ENCODE measurements at regions of chr7 and their contacts with region 1.

Region 1: GRCh38 chr7:158613481-158613880 is 25.9 kb upstream of the PTPRN2 start:
- DNase-seq: peak; percentile 79
- ATAC-seq: peak; percentile 93
- H3K4me3 ChIP-seq: no peak overlapping the region; the same call in 1 of the 2 replicates
- H3K27ac ChIP-seq: peak overlapping the region; percentile 57
- H3K4me1 ChIP-seq: peaks cover 15% of the 10 kb centered on the region
- H3K27me3 ChIP-seq: no peaks in the 10 kb centered on the region
- CTCF ChIP-seq: no peak
- EP300 ChIP-seq: no peak
- POLR2A ChIP-seq: no peak
- RAD21 ChIP-seq: no peak

Region 2: DNA sequence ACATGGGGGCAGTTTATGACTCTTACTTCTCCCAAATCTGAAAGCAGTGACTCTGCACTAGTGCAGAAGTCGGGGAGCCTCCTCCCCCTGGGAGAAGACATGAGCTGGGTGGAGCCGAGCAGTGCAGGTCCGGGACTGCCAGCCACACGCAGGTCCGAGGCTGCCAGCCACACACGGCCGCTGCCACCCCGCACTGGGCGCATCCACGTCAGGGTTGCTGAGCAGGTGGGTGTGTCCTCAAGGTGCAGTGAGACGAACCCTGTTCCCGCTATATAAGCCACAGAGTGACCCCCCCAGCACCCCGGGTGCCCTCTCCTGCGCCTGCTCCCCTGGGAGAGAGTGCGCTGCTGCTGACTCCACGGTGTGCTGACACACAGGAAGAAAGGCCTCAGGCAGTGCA is 456.0 kb before region 1 on chr7:
- CTCF ChIA-PET with region 1: no interaction called
- POLR2A ChIA-PET with region 1: no interaction called
- RAD21 ChIA-PET with region 1: no interaction called
- SMC1A ChIA-PET with region 1: no interaction called
- in situ Hi-C with region 1: no loop called
- intact Hi-C with region 1: no loop called
- DNase-seq: no peak
- ATAC-seq: no peak
- H3K4me3 ChIP-seq: no peak overlapping the region
- H3K27ac ChIP-seq: no peak overlapping the region
- H3K4me1 ChIP-seq: no peaks in the 10 kb centered on the region
- H3K27me3 ChIP-seq: no peaks in the 10 kb centered on the region
- CTCF ChIP-seq: no peak
- EP300 ChIP-seq: no peak
- POLR2A ChIP-seq: no peak
- RAD21 ChIP-seq: no peak

Region 3: GRCh38 chr7:158655931-158656441 is 42.5 kb after region 1 on chr7:
- CTCF ChIA-PET with region 1: interaction called, 3 read pairs
- POLR2A ChIA-PET with region 1: no interaction called
- RAD21 ChIA-PET with region 1: no interaction called
- SMC1A ChIA-PET with region 1: interaction called, 4 read pairs
- in situ Hi-C with region 1: no loop called
- intact Hi-C with region 1: loop called (anchors 2 kb)
- DNase-seq: peak; percentile 91
- ATAC-seq: peak; percentile 97
- H3K4me3 ChIP-seq: no peak overlapping the region
- H3K27ac ChIP-seq: peak overlapping the region; percentile 64
- H3K4me1 ChIP-seq: peaks cover 20% of the 10 kb centered on the region
- H3K27me3 ChIP-seq: no peaks in the 10 kb centered on the region
- CTCF ChIP-seq: no peak
- EP300 ChIP-seq: peak; percentile 64 to 75; a peak in 3 of 4 replicates
- POLR2A ChIP-seq: no peak
- RAD21 ChIP-seq: no peak

Measured in GM12878 (cell line).